Panc1 (cell line): ENCODE measurements at regions of chr11 and their contacts with region 1.

Region 1: DNA sequence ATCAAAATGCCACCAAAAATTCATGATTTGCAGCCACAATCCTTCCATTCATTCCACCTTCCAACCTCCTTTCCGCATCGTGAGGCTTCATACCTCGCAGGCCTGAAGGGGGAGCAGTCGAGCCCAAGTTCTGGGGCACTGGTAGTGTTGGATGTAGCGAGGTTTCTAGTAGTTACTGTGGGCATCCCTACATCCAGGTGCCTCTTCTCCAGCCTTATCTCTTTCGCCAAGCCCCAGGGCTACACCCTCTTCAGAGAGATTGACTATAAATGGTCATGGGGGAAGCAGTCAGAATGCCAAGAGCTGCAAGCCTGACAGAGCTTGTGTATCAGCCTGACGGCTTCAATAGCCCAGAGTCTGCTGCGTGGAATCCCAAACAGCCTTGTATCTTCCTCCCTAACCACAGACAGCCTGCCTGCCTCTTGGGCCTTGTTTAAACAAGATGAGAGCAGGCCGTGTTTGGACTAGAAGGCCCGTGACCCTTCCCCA is 28.9 kb downstream of the CLMP start:
- DNase-seq: no peak
- ATAC-seq: peak; percentile 52
- H3K4me3 ChIP-seq: no peak overlapping the region
- H3K27ac ChIP-seq: no peak overlapping the region
- H3K4me1 ChIP-seq: no peaks in the 10 kb centered on the region
- H3K27me3 ChIP-seq: no peaks in the 10 kb centered on the region
- CTCF ChIP-seq: peak; percentile 82

Region 2: GRCh38 chr11:121341609-121342008 is 1824.5 kb before region 1 on chr11:
- CTCF ChIA-PET with region 1: no interaction called
- POLR2A ChIA-PET with region 1: interaction called, 10 read pairs
- in situ Hi-C with region 1: no loop called
- intact Hi-C with region 1: no loop called
- DNase-seq: no peak
- ATAC-seq: no peak
- H3K4me3 ChIP-seq: no peak overlapping the region
- H3K27ac ChIP-seq: no peak overlapping the region
- H3K4me1 ChIP-seq: no peaks in the 10 kb centered on the region
- H3K27me3 ChIP-seq: peaks cover 12% of the 10 kb centered on the region
- CTCF ChIP-seq: no peak

Region 3: GRCh38 chr11:123103326-123103980 is 62.7 kb before region 1 on chr11:
- CTCF ChIA-PET with region 1: no interaction called
- POLR2A ChIA-PET with region 1: no interaction called
- in situ Hi-C with region 1: no loop called
- intact Hi-C with region 1: no loop called
- DNase-seq: peak; percentile 59
- ATAC-seq: peak; percentile 85
- H3K4me3 ChIP-seq: no peak overlapping the region
- H3K27ac ChIP-seq: no peak overlapping the region
- H3K4me1 ChIP-seq: no peaks in the 10 kb centered on the region
- H3K27me3 ChIP-seq: no peaks in the 10 kb centered on the region
- CTCF ChIP-seq: peak; percentile 87

Region 4: DNA sequence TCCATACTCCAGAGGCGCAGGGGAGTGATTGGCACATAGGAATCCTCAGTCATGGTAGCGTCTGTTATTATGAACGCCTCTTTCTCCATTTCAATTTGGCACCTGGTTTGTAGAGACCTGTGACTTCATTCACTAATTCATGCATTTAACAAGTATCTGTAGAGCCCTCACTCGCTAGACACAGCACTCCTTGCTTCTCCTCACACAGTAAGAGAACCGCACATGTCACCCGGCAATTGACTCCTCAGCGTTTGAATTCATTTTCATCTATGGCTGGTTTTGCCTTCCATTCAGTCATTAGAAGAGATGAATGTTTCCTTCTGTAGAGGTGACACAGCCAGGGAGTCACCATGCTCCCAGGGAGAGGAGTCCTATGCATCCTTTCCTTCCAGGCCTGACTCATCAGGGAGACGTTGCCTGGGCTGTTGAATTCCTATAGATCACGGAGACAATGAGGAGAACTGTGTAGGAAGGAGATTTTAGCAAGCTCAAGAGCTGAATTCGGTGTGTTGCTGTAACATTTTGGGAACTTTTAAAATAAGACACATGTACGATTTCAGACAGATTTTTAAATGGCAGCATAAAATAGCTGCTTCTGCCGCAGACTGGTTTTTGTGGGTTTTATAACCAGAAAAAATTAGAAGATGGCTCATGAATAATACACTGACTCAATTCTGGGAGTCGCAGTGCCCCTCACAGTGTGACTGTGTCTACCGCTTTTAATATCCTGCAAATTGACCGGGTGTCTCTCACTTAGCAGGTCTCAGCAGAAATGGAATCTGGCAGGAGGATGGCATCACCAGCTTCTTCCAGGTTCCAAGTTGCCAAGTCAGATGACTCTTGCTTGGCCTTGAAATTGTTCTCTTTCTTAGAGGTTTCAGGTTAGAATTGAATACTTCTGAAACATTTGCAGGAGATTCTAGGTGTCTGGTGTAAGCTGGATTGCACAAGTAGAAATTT is 73.4 kb after region 1 on chr11:
- CTCF ChIA-PET with region 1: no interaction called
- POLR2A ChIA-PET with region 1: no interaction called
- in situ Hi-C with region 1: loop called (anchors 5 kb)
- intact Hi-C with region 1: no loop called
- DNase-seq: no peak
- ATAC-seq: no peak
- H3K4me3 ChIP-seq: no peak overlapping the region
- H3K27ac ChIP-seq: no peak overlapping the region
- H3K4me1 ChIP-seq: no peaks in the 10 kb centered on the region
- H3K27me3 ChIP-seq: no peaks in the 10 kb centered on the region
- CTCF ChIP-seq: no peak